Caco-2 (cell line): ENCODE measurements at regions of chr3 and their contacts with region 1.

Region 1: GRCh38 chr3:192816351-192816750 is 89.0 kb upstream of the FGF12 start:
- DNase-seq: peak in 1 of 2 experiments; percentile 56
- H3K4me3 ChIP-seq: no peak overlapping the region
- H3K4me3 Mint-ChIP-seq: no peak overlapping the region
- H3K27ac Mint-ChIP-seq: no peak overlapping the region
- H3K4me1 ChIP-seq: peaks cover 29% of the 10 kb centered on the region
- H3K4me1 Mint-ChIP-seq: peaks cover 46% of the 10 kb centered on the region
- H3K27me3 ChIP-seq: no peaks in the 10 kb centered on the region
- H3K27me3 Mint-ChIP-seq: no peaks in the 10 kb centered on the region
- CTCF ChIP-seq: peak; percentile 55 to 77

Region 2: GRCh38 chr3:192597533-192598302 is 218.6 kb before region 1 on chr3:
- CTCF ChIA-PET with region 1: no interaction called
- POLR2A ChIA-PET with region 1: no interaction called
- intact Hi-C with region 1: no loop called
- DNase-seq: peak; percentile 45 to 65
- H3K4me3 ChIP-seq: no peak overlapping the region
- H3K4me3 Mint-ChIP-seq: peak overlapping the region; percentile 39
- H3K27ac Mint-ChIP-seq: peak overlapping the region; percentile 79
- H3K4me1 ChIP-seq: peaks cover 13% of the 10 kb centered on the region
- H3K4me1 Mint-ChIP-seq: peaks cover 14% of the 10 kb centered on the region
- H3K27me3 ChIP-seq: no peaks in the 10 kb centered on the region
- H3K27me3 Mint-ChIP-seq: no peaks in the 10 kb centered on the region
- CTCF ChIP-seq: no peak

Region 3: GRCh38 chr3:192887047-192887446 is 70.7 kb after region 1 on chr3:
- CTCF ChIA-PET with region 1: interaction called, 3 read pairs
- POLR2A ChIA-PET with region 1: no interaction called
- intact Hi-C with region 1: loop called (anchors 2 kb)
- DNase-seq: peak; percentile 36 to 61
- H3K4me3 ChIP-seq: peak overlapping the region; percentile 11; the same call in 1 of the 2 replicates
- H3K4me3 Mint-ChIP-seq: peak overlapping the region; percentile 77
- H3K27ac Mint-ChIP-seq: peak overlapping the region; percentile 89
- H3K4me1 ChIP-seq: peaks cover 77% of the 10 kb centered on the region
- H3K4me1 Mint-ChIP-seq: peaks cover 47% of the 10 kb centered on the region
- H3K27me3 ChIP-seq: no peaks in the 10 kb centered on the region
- H3K27me3 Mint-ChIP-seq: no peaks in the 10 kb centered on the region
- CTCF ChIP-seq: no peak

Region 4: GRCh38 chr3:192943393-192943792 is 127.0 kb after region 1 on chr3:
- CTCF ChIA-PET with region 1: no interaction called
- POLR2A ChIA-PET with region 1: no interaction called
- intact Hi-C with region 1: no loop called
- DNase-seq: no peak
- H3K4me3 ChIP-seq: no peak overlapping the region
- H3K4me3 Mint-ChIP-seq: no peak overlapping the region
- H3K27ac Mint-ChIP-seq: no peak overlapping the region
- H3K4me1 ChIP-seq: no peaks in the 10 kb centered on the region
- H3K4me1 Mint-ChIP-seq: no peaks in the 10 kb centered on the region
- H3K27me3 ChIP-seq: no peaks in the 10 kb centered on the region
- H3K27me3 Mint-ChIP-seq: no peaks in the 10 kb centered on the region
- CTCF ChIP-seq: no peak

Region 5: DNA sequence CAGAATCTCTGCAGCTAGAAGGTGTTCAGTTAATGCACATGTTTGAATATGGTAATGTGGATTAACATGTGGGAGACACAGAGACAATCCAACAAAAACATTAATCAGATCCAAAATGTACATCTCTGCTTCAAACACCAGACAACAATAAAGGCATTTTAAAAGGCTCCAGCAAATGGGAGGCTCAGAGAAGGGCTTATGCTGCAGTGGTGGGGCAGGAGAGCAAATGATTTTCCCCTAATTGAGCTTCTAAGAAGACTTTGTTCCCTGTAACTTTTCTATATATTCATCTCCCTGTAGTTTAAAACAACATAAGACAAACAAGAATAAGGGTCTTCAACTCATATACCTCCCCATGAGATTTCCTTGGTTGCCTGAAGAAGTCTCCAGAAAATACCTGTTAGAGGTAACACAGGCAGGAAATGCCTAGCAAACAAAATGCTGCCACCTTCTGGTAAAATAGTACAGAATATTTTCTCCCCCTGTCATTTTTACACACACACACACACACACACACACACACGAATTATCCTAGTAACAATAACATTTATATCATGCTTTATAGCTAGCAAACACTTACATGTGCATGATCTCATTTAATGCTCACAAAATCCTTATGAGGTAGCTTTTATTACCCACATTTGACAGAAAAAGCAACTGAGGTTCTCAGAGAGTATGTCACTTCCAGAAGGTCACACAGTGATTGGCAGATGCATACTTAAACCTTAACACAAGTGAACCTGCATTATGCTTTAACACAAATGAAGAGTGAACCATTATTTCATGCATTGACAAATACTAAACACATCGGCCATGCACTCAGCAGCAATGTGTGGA is 224.7 kb after region 1 on chr3:
- CTCF ChIA-PET with region 1: interaction called, 21 read pairs
- POLR2A ChIA-PET with region 1: no interaction called
- intact Hi-C with region 1: loop called (anchors 1 kb)
- DNase-seq: peak in 1 of 2 experiments; percentile 63
- H3K4me3 ChIP-seq: no peak overlapping the region
- H3K4me3 Mint-ChIP-seq: no peak overlapping the region
- H3K27ac Mint-ChIP-seq: no peak overlapping the region
- H3K4me1 ChIP-seq: peaks cover 3% of the 10 kb centered on the region
- H3K4me1 Mint-ChIP-seq: peaks cover under 1% of the 10 kb centered on the region
- H3K27me3 ChIP-seq: no peaks in the 10 kb centered on the region
- H3K27me3 Mint-ChIP-seq: no peaks in the 10 kb centered on the region
- CTCF ChIP-seq: peak; percentile 47 to 49

Region 6: DNA sequence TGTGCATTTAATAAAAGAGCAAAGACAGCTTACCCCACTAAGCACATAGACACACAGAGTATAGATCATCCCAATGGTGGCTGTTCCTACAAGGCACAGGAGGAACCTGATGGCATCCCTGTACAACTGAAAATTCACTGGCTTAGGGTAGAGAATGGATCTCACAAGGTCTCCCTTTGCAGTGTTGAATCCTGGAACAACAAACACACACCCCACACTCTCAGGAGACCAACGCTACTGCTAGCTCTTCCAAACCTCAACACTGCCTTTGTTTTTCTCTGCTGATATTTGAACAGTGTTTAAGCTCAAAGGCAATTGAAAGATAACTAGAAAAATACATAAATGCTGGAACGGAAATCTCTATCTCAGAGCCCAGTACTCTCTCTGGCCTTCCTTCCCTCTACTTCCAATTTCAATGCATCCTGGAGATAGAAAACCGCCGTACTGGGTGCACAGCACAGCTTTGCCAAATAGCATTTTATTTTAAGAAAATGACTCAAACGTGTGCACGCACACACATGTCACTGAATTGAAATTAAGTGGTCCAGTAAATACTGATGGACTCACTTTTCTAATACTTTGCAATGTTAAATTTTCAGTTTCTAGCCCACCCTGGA is 649.7 kb after region 1 on chr3:
- CTCF ChIA-PET with region 1: no interaction called
- POLR2A ChIA-PET with region 1: no interaction called
- intact Hi-C with region 1: loop called (anchors 10 kb)
- DNase-seq: no peak
- H3K4me3 ChIP-seq: no peak overlapping the region
- H3K4me3 Mint-ChIP-seq: no peak overlapping the region
- H3K27ac Mint-ChIP-seq: no peak overlapping the region
- H3K4me1 ChIP-seq: no peaks in the 10 kb centered on the region
- H3K4me1 Mint-ChIP-seq: peaks cover 6% of the 10 kb centered on the region
- H3K27me3 ChIP-seq: no peaks in the 10 kb centered on the region
- H3K27me3 Mint-ChIP-seq: peaks cover 5% of the 10 kb centered on the region
- CTCF ChIP-seq: no peak